ENCODE measurements at regions of chr3 and their contacts with region 1.

Region 1: GRCh38 chr3:155805802-155806618 is at the start of gene C3orf33:
- DNase-seq: peak; percentile 87
- ATAC-seq: peak; percentile 96
- H3K4me3 Mint-ChIP-seq: peak within 1 kb of the TSS; percentile 86
- H3K27ac Mint-ChIP-seq: peak within 1 kb of the TSS; percentile 74
- H3K4me1 Mint-ChIP-seq: peaks cover 2% of the 10 kb centered on the region
- H3K27me3 Mint-ChIP-seq: no peaks in the 10 kb centered on the region
- total RNA-seq, gene C3orf33: 2.1 to 2.2 TPM

Region 2: DNA sequence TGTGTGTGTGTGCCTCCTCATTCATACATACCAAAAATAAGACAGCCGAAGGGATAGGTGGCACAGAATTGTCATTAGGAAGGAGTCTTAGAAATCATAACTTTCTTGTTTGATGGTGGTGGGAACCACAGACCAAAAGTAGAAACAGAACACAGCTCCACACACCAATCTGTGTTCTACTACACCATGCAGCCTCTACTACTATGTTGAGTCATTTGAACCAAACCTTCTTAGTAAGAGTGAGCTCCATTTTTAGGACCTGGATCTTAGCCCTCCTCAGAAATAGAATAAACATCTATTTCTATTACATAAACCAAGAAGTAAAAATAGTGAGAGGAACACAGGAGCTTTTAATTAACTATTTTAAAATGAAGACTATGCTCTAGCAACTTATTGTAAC is 33.2 kb before region 1 on chr3:
- POLR2A ChIA-PET with region 1: no interaction called
- DNase-seq: no peak
- ATAC-seq: no peak
- H3K4me3 Mint-ChIP-seq: no peak overlapping the region
- H3K27ac Mint-ChIP-seq: no peak overlapping the region
- H3K4me1 Mint-ChIP-seq: no peaks in the 10 kb centered on the region
- H3K27me3 Mint-ChIP-seq: no peaks in the 10 kb centered on the region

Region 3: GRCh38 chr3:155791190-155791589 is 14.8 kb before region 1 on chr3:
- POLR2A ChIA-PET with region 1: no interaction called
- DNase-seq: no peak
- ATAC-seq: no peak
- H3K4me3 Mint-ChIP-seq: no peak overlapping the region
- H3K27ac Mint-ChIP-seq: no peak overlapping the region
- H3K4me1 Mint-ChIP-seq: peaks cover 3% of the 10 kb centered on the region
- H3K27me3 Mint-ChIP-seq: no peaks in the 10 kb centered on the region

Region 4: GRCh38 chr3:155854141-155854940 is 48.3 kb after region 1 on chr3 and contains the start of gene SLC33A1:
- POLR2A ChIA-PET with region 1: interaction called, 17 read pairs
- DNase-seq: peak; percentile 98
- ATAC-seq: peak; percentile 92
- H3K4me3 Mint-ChIP-seq: peak within 1 kb of the TSS; percentile 87
- H3K27ac Mint-ChIP-seq: peak within 1 kb of the TSS; percentile 99
- H3K4me1 Mint-ChIP-seq: peaks cover 33% of the 10 kb centered on the region
- H3K27me3 Mint-ChIP-seq: no peaks in the 10 kb centered on the region
- total RNA-seq, gene SLC33A1: 26.4 to 27.3 TPM

Region 5: DNA sequence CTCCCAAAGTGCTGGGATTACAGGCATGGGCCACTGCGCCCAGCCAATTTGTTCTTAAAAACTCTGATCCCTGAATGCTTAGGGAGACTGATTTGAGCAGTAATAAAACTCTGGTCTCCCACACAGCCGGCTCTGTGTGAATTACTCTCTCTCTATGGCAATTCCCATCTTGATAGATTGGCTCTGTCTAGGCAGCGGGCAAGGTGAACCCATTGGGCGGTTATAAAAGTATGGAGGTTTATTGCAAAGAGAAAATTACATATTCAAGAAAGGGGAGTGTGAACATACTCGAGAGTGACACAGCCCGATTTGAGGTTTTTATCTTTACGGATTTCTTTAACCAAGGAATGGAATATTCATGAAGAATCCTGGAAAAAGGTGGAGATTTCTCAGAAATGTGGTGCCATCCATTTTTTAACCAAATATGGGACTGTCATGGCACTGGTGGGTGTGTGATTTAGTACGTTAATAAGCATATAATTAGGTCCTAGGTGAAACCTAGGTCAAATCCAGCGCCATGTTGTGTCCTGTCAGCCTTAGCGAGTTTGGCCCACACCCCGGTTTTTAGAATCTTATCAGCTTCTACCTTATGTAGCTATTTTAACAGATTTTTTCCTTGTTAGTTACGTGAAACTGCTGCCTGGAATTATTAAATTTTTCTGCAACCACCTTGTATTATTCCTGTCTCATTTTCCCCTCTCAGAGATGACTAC is 57.2 kb after region 1 on chr3:
- POLR2A ChIA-PET with region 1: interaction called, 10 read pairs
- DNase-seq: no peak
- ATAC-seq: no peak
- H3K4me3 Mint-ChIP-seq: peak overlapping the region; percentile 57
- H3K27ac Mint-ChIP-seq: peak overlapping the region; percentile 91
- H3K4me1 Mint-ChIP-seq: peaks cover 24% of the 10 kb centered on the region
- H3K27me3 Mint-ChIP-seq: peaks cover 1% of the 10 kb centered on the region

Region 6: GRCh38 chr3:155870133-155870944 is 64.3 kb after region 1 on chr3 and contains the start of gene GMPS:
- POLR2A ChIA-PET with region 1: interaction called, 33 read pairs
- DNase-seq: peak; percentile 99
- ATAC-seq: peak; percentile 91
- H3K4me3 Mint-ChIP-seq: peak within 1 kb of the TSS; percentile 100
- H3K27ac Mint-ChIP-seq: peak within 1 kb of the TSS; percentile 98
- H3K4me1 Mint-ChIP-seq: peaks cover 15% of the 10 kb centered on the region
- H3K27me3 Mint-ChIP-seq: peaks cover 1% of the 10 kb centered on the region
- total RNA-seq, gene GMPS: 84.0 to 86.8 TPM